ENCODE measurements at regions of chr17 and their contacts with region 1.

Region 1: GRCh38 chr17:40362696-40363110 is 1.8 kb downstream of the GJD3 start:
- DNase-seq: peak; percentile 60 to 90 (median 74)
- ATAC-seq: peak; percentile 88
- H3K4me3 ChIP-seq: peak overlapping the region; percentile 35
- H3K4me3 Mint-ChIP-seq: peak overlapping the region; percentile 10 to 87 (median 70)
- H3K27ac ChIP-seq: no peak overlapping the region
- H3K27ac Mint-ChIP-seq: peak overlapping the region in 1 of 9 donors; percentile 85
- H3K4me1 ChIP-seq: peaks cover 4 to 7% of the 10 kb centered on the region in 2 donors
- H3K4me1 Mint-ChIP-seq: peaks cover 4 to 37% (median 12%) of the 10 kb centered on the region in 7 donors
- H3K27me3 ChIP-seq: no peaks in the 10 kb centered on the region
- H3K27me3 Mint-ChIP-seq: peaks cover 0 to 23% (median 8%) of the 10 kb centered on the region in 5 donors

Region 2: DNA sequence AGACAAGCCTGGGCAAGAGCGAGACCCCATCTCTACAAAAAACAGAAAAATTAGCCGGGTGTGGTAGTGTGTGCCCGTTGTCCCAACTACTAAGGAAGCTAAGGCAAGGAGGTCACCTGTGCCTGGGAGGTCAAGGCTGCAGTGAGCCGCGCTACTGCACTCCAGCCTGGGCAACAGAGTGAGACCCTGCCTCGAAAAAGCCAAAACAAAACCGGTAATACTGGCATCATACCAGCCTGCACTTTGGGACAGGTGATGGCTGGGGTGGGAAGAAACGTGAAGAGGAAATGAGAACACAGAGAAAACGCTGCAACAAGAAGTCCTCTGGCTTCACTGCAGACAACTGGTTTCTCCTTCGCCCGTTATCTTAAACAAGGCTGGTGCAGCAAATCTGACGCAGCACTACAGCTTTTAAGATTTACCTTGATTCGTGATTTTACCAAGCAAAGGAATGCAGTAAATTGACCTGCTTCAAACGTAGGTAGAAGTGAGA is 223.1 kb before region 1 on chr17:
- CTCF ChIA-PET with region 1: no interaction called
- POLR2A ChIA-PET with region 1: no interaction called
- intact Hi-C with region 1: no loop called
- DNase-seq: peak in 4 of 9 donors; percentile 8 to 25 (median 10)
- ATAC-seq: peak; percentile 8
- H3K4me3 ChIP-seq: peak overlapping the region; percentile 80
- H3K4me3 Mint-ChIP-seq: peak overlapping the region; percentile 83 to 97 (median 93)
- H3K27ac ChIP-seq: peak overlapping the region; percentile 96
- H3K27ac Mint-ChIP-seq: peak overlapping the region; percentile 85 to 100 (median 98)
- H3K4me1 ChIP-seq: peaks cover 21 to 28% of the 10 kb centered on the region in 2 donors
- H3K4me1 Mint-ChIP-seq: peaks cover 14 to 62% (median 44%) of the 10 kb centered on the region in 7 donors
- H3K27me3 ChIP-seq: no peaks in the 10 kb centered on the region
- H3K27me3 Mint-ChIP-seq: peaks cover 0 to 2% (median 0%) of the 10 kb centered on the region in 5 donors

Region 3: GRCh38 chr17:40303009-40303657 is 59.6 kb before region 1 on chr17:
- CTCF ChIA-PET with region 1: interaction called, 233 read pairs
- POLR2A ChIA-PET with region 1: interaction called, 3 read pairs
- intact Hi-C with region 1: no loop called
- DNase-seq: peak in 7 of 9 donors; percentile 43 to 70 (median 64)
- ATAC-seq: peak; percentile 86
- H3K4me3 ChIP-seq: no peak overlapping the region
- H3K4me3 Mint-ChIP-seq: peak overlapping the region in 2 of 10 donors; percentile 8 to 44
- H3K27ac ChIP-seq: no peak overlapping the region
- H3K27ac Mint-ChIP-seq: peak overlapping the region in 7 of 9 donors; percentile 3 to 34 (median 19)
- H3K4me1 ChIP-seq: peaks cover 13 to 28% of the 10 kb centered on the region in 2 donors
- H3K4me1 Mint-ChIP-seq: peaks cover 11 to 21% (median 15%) of the 10 kb centered on the region in 7 donors
- H3K27me3 ChIP-seq: no peaks in the 10 kb centered on the region
- H3K27me3 Mint-ChIP-seq: no peaks in the 10 kb centered on the region

Region 4: GRCh38 chr17:40443583-40444327 is 81.1 kb after region 1 on chr17:
- CTCF ChIA-PET with region 1: interaction called, 4 read pairs
- POLR2A ChIA-PET with region 1: no interaction called
- intact Hi-C with region 1: loop called (anchors 1 to 2 kb)
- DNase-seq: peak; percentile 40 to 80 (median 61)
- ATAC-seq: peak; percentile 87
- H3K4me3 ChIP-seq: peak overlapping the region; percentile 21
- H3K4me3 Mint-ChIP-seq: peak overlapping the region; percentile 65 to 90 (median 84)
- H3K27ac ChIP-seq: peak overlapping the region; percentile 1
- H3K27ac Mint-ChIP-seq: peak overlapping the region in 8 of 9 donors; percentile 60 to 93 (median 78)
- H3K4me1 ChIP-seq: peaks cover 25 to 27% of the 10 kb centered on the region in 2 donors
- H3K4me1 Mint-ChIP-seq: peaks cover 30 to 58% (median 33%) of the 10 kb centered on the region in 7 donors
- H3K27me3 ChIP-seq: no peaks in the 10 kb centered on the region
- H3K27me3 Mint-ChIP-seq: peaks cover 0 to 5% (median 0%) of the 10 kb centered on the region in 5 donors

Region 5: DNA sequence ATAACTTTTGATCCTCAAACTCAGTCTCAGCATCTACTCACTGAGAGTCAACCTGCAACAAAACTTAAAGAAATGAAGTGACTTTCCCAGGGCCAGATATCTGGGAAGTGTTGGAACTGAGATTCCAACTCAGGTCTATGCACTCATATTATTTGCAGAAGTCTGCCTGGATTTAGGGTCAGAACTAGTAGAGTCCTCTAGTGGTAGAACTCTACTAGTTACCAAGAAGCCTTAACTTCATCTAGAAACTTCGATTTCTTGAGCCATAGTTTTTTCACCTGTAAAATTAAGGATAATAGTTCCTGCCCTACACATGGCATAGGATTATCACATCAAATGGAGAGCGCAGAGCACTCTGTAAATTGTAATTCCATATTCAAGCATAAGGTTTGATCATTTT is 364.2 kb after region 1 on chr17:
- CTCF ChIA-PET with region 1: no interaction called
- POLR2A ChIA-PET with region 1: no interaction called
- intact Hi-C with region 1: loop called in 1 of 2 experiments (anchors 1 kb)
- DNase-seq: peak in 5 of 9 donors; percentile 4 to 37 (median 23)
- ATAC-seq: no peak
- H3K4me3 ChIP-seq: no peak overlapping the region
- H3K4me3 Mint-ChIP-seq: no peak overlapping the region
- H3K27ac ChIP-seq: no peak overlapping the region
- H3K27ac Mint-ChIP-seq: no peak overlapping the region
- H3K4me1 ChIP-seq: no peaks in the 10 kb centered on the region
- H3K4me1 Mint-ChIP-seq: peaks cover 0 to 2% (median 0%) of the 10 kb centered on the region in 7 donors
- H3K27me3 ChIP-seq: peaks cover 0 to 3% of the 10 kb centered on the region in 2 donors
- H3K27me3 Mint-ChIP-seq: peaks cover 5 to 44% (median 29%) of the 10 kb centered on the region in 5 donors